H1 (cell line): ENCODE measurements at regions of chr7 and their contacts with region 1.

Region 1: DNA sequence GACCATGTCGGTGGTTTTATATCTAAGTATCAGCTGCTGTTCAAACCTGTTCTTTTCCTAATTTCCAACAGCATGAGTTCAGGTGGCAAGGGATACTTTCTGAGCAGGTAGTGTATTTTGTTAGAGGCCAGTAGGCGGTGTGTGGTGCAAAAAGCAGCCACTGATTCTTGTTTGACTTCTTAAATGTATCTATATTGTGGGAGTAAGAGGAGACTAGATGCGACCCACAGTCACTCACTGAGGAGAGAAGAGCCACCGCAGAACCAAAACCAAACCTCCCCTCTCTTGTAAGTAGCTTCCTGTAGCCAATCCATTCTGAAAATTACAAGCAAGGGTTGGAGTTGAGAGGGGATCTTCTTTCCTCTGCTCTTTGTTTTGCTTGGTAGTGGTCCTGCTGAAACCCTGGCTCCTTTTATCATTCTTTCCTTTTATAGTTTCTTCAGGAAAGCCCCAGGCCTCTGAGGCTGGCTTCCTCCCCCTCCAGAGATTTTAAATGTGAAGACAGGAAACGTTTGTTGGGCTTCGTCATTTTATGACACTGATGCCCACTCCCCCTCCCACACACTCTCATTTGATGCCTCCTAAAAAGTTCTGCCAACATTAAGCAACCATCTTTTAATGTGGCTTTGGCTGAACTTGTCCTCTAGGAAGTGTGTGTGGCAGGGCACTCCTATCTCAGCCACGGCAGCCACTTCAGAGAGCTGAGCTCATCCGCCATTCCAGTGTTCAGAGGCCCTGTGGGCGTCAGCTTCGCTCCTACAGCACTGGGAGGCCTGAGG is 566.0 kb downstream of the SUGCT start:
- DNase-seq: no peak
- H3K4me3 ChIP-seq: no peak overlapping the region
- H3K27ac ChIP-seq: no peak overlapping the region
- H3K4me1 ChIP-seq: peaks cover 0 to 4% (median 2%) of the 10 kb centered on the region in 4 experiments; a peak in 4 of 7 replicates
- H3K27me3 ChIP-seq: no peaks in the 10 kb centered on the region
- CTCF ChIP-seq: peak in 1 of 3 experiments; percentile 20; a peak in 1 of 4 replicates
- EP300 ChIP-seq: no peak
- POLR2A ChIP-seq: no peak
- RAD21 ChIP-seq: peak; percentile 23 to 28; a peak in 2 of 4 replicates

Region 2: GRCh38 chr7:40717242-40717641 is 16.4 kb after region 1 on chr7:
- CTCF ChIA-PET with region 1: interaction called, 13 read pairs
- POLR2A ChIA-PET with region 1: interaction called, 4 read pairs
- DNase-seq: peak; percentile 62 to 73
- H3K4me3 ChIP-seq: no peak overlapping the region; a peak in 1 of 8 replicates
- H3K27ac ChIP-seq: no peak overlapping the region; the same call in 1 of the 2 replicates
- H3K4me1 ChIP-seq: peaks cover 0 to 12% (median 3%) of the 10 kb centered on the region in 4 experiments; a peak in 4 of 7 replicates
- H3K27me3 ChIP-seq: no peaks in the 10 kb centered on the region
- CTCF ChIP-seq: no peak
- EP300 ChIP-seq: no peak
- POLR2A ChIP-seq: peak; percentile 35 to 57
- RAD21 ChIP-seq: no peak